ENCODE measurements at regions of chr5 and their contacts with region 1.

Region 1: GRCh38 chr5:146130440-146131045 is 25.2 kb upstream of the PLAC8L1 start:
- DNase-seq: no peak
- CTCF ChIP-seq: peak; percentile 62

Region 2: GRCh38 chr5:145718956-145719355 is 411.6 kb before region 1 on chr5:
- in situ Hi-C with region 1: loop called (anchors 25 kb)
- DNase-seq: no peak
- CTCF ChIP-seq: no peak

Measured in GM13977 (cell line).